ENCODE measurements at regions of chr9 and their contacts with region 1.

Region 1: GRCh38 chr9:134286471-134287245 is 39.6 kb upstream of the RXRA start:
- DNase-seq: no peak
- H3K4me3 ChIP-seq: no peak overlapping the region
- H3K27ac ChIP-seq: no peak overlapping the region
- H3K27me3 ChIP-seq: peaks cover 28% of the 10 kb centered on the region
- CTCF ChIP-seq: no peak

Region 2: GRCh38 chr9:134376386-134377142 is 89.9 kb after region 1 on chr9:
- CTCF ChIA-PET with region 1: no interaction called
- POLR2A ChIA-PET with region 1: interaction called, 10 read pairs
- DNase-seq: no peak
- H3K4me3 ChIP-seq: no peak overlapping the region
- H3K27ac ChIP-seq: no peak overlapping the region
- H3K27me3 ChIP-seq: no peaks in the 10 kb centered on the region
- CTCF ChIP-seq: no peak

Measured in AG04450 (cell line).